Endothelial cell of umbilical vein (primary cell): ENCODE measurements at regions of chr11 and their contacts with region 1.

Region 1: GRCh38 chr11:82718307-82718706 is 15.4 kb downstream of the FAM181B start:
- DNase-seq: peak; percentile 34
- H3K4me3 ChIP-seq: no peak overlapping the region
- H3K27ac ChIP-seq: no peak overlapping the region
- H3K4me1 ChIP-seq: no peaks in the 10 kb centered on the region
- H3K27me3 ChIP-seq: peaks cover 10 to 13% of the 10 kb centered on the region in 2 experiments
- CTCF ChIP-seq: peak; percentile 61 to 72
- POLR2A ChIP-seq: no peak

Region 2: DNA sequence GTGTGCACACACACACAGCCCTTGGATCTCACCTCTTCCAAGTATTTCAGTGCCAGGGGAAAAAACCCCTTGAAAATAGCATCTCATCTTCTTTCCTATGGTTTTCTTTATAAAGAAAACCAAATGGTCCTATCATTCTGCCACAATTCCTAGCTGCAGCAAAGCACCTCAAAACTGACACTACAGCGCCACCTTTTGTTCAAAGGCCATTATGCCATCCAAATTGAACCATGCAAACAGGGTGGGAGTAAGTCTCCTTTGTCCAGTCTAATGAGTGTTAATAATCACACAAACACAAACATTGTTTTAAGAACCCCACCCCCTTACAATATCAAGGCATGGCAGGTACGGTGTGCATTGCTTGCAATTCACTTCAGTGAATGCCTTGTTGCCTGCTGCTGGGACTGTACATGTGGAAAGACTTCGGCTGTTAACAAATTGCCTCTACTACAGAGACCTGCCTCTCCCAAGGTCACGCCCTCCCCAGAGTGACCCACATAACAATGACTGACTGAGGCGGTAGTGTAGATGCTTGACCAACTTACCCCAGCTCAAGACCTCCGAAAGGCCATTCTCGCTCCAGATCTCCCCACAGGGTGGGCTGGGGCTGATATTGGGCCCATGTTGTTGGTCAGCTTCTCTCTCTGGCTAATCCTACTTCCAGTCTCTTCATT is 16.3 kb before region 1 on chr11:
- CTCF ChIA-PET with region 1: interaction called, 15 read pairs
- POLR2A ChIA-PET with region 1: no interaction called
- dilution Hi-C with region 1: no loop called
- intact Hi-C with region 1: no loop called
- DNase-seq: peak; percentile 50
- H3K4me3 ChIP-seq: no peak overlapping the region
- H3K27ac ChIP-seq: no peak overlapping the region
- H3K4me1 ChIP-seq: no peaks in the 10 kb centered on the region
- H3K27me3 ChIP-seq: peaks cover 4 to 6% of the 10 kb centered on the region in 2 experiments
- CTCF ChIP-seq: peak; percentile 61 to 62
- POLR2A ChIP-seq: no peak

Region 3: GRCh38 chr11:82733444-82734119 is 15.3 kb after region 1 on chr11 and contains the start of gene FAM181B:
- CTCF ChIA-PET with region 1: interaction called, 11 read pairs
- POLR2A ChIA-PET with region 1: no interaction called
- dilution Hi-C with region 1: no loop called
- intact Hi-C with region 1: no loop called
- DNase-seq: peak; percentile 29
- H3K4me3 ChIP-seq: peak within 1 kb of the TSS; percentile 21 to 24 (median 22)
- H3K27ac ChIP-seq: no peak within 1 kb of the TSS
- H3K4me1 ChIP-seq: no peaks in the 10 kb centered on the region
- H3K27me3 ChIP-seq: peaks cover 47 to 79% of the 10 kb centered on the region in 2 experiments
- CTCF ChIP-seq: no peak
- POLR2A ChIP-seq: no peak
- total RNA-seq, gene FAM181B: not detected in 2 replicates

Region 4: GRCh38 chr11:82858556-82859091 is 140.3 kb after region 1 on chr11:
- CTCF ChIA-PET with region 1: interaction called, 13 read pairs
- POLR2A ChIA-PET with region 1: no interaction called
- dilution Hi-C with region 1: no loop called
- intact Hi-C with region 1: no loop called
- DNase-seq: peak; percentile 89
- H3K4me3 ChIP-seq: peak overlapping the region in 1 of 3 experiments; percentile 50
- H3K27ac ChIP-seq: peak overlapping the region; percentile 98
- H3K4me1 ChIP-seq: peaks cover 52% of the 10 kb centered on the region
- H3K27me3 ChIP-seq: no peaks in the 10 kb centered on the region
- CTCF ChIP-seq: no peak
- POLR2A ChIP-seq: no peak

Region 5: GRCh38 chr11:82927254-82927880 is 209.1 kb after region 1 on chr11:
- CTCF ChIA-PET with region 1: interaction called, 3 read pairs
- POLR2A ChIA-PET with region 1: no interaction called
- dilution Hi-C with region 1: no loop called
- intact Hi-C with region 1: loop called (anchors 2 kb)
- DNase-seq: peak; percentile 59
- H3K4me3 ChIP-seq: no peak overlapping the region
- H3K27ac ChIP-seq: no peak overlapping the region
- H3K4me1 ChIP-seq: peaks cover 16% of the 10 kb centered on the region
- H3K27me3 ChIP-seq: no peaks in the 10 kb centered on the region
- CTCF ChIP-seq: peak; percentile 59 to 61
- POLR2A ChIP-seq: no peak

Region 6: GRCh38 chr11:83249972-83250593 is 531.8 kb after region 1 on chr11:
- CTCF ChIA-PET with region 1: interaction called, 29 read pairs
- POLR2A ChIA-PET with region 1: no interaction called
- dilution Hi-C with region 1: no loop called
- intact Hi-C with region 1: loop called (anchors 1 kb)
- DNase-seq: peak; percentile 46
- H3K4me3 ChIP-seq: no peak overlapping the region
- H3K27ac ChIP-seq: no peak overlapping the region
- H3K4me1 ChIP-seq: no peaks in the 10 kb centered on the region
- H3K27me3 ChIP-seq: no peaks in the 10 kb centered on the region
- CTCF ChIP-seq: peak; percentile 35 to 53
- POLR2A ChIP-seq: no peak

Region 7: DNA sequence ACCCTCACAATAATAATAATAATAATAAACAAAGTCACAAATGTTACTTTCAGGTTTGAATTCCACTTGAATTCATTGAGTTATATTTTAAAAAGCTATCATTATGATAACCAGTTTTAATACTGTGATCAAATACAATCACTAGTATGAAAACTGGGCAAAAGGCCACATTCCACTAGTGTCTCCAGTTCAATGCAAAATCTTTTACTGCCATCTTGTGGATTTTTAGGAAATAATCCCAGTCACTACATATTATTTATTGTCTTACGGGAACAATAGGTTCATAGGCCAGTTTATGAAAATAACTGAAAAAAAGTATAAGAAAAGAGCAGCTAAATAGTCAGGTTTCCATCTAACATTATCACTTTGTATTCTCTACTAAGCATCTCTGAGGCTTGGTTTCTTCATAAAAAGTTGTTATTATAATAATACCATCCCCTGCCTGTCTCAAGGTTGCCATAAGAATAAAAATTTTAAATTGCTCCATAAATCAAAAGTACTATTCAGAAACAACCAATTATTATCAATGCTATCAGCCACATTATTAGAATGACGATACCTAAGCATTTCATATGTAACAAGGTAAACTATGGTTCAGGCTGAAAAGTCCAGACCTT is 1101.7 kb after region 1 on chr11:
- CTCF ChIA-PET with region 1: interaction called, 62 read pairs
- POLR2A ChIA-PET with region 1: no interaction called
- dilution Hi-C with region 1: no loop called
- intact Hi-C with region 1: loop called (anchors 1 kb)
- DNase-seq: peak; percentile 65
- H3K4me3 ChIP-seq: no peak overlapping the region
- H3K27ac ChIP-seq: no peak overlapping the region
- H3K4me1 ChIP-seq: no peaks in the 10 kb centered on the region
- H3K27me3 ChIP-seq: peaks cover 0 to 2% of the 10 kb centered on the region in 2 experiments
- CTCF ChIP-seq: peak; percentile 18 to 23
- POLR2A ChIP-seq: no peak